WTC11 (cell line): ENCODE measurements at regions of chr2 and their contacts with region 1.

Region 1: GRCh38 chr2:158006961-158007719 is 94.5 kb upstream of the UPP2 start:
- DNase-seq: peak; percentile 32
- ATAC-seq: peak; percentile 54
- H3K4me3 Mint-ChIP-seq: no peak overlapping the region
- H3K27ac Mint-ChIP-seq: no peak overlapping the region
- H3K4me1 Mint-ChIP-seq: peaks cover 39% of the 10 kb centered on the region
- H3K27me3 Mint-ChIP-seq: peaks cover 29% of the 10 kb centered on the region
- CTCF ChIP-seq: no peak

Region 2: GRCh38 chr2:157901325-157901724 is 105.8 kb before region 1 on chr2:
- CTCF ChIA-PET with region 1: interaction called, 14 read pairs
- POLR2A ChIA-PET with region 1: no interaction called
- DNase-seq: no peak
- ATAC-seq: peak; percentile 76
- H3K4me3 Mint-ChIP-seq: no peak overlapping the region
- H3K27ac Mint-ChIP-seq: no peak overlapping the region
- H3K4me1 Mint-ChIP-seq: peaks cover 24% of the 10 kb centered on the region
- H3K27me3 Mint-ChIP-seq: peaks cover 16% of the 10 kb centered on the region
- CTCF ChIP-seq: no peak

Region 3: DNA sequence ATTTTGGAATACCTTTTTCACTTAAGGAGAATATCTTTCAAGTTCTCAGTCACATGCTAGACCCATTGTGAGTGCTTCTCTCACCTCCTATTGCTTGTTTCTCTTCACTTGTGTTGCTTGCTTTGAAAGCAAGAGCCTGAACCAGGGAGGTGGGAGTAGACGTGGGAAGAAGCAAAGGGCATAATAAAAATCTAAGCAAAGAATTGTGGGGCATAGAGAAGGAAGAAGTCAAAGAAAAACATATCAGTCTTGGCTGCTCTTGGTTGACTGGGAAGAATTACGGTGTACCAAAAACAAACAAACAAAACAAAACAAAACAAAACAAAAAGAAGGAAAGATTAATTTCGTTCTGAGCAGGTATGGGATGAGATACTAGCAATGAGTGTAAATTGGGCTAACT is 82.1 kb before region 1 on chr2:
- CTCF ChIA-PET with region 1: no interaction called
- POLR2A ChIA-PET with region 1: no interaction called
- DNase-seq: no peak
- ATAC-seq: no peak
- H3K4me3 Mint-ChIP-seq: no peak overlapping the region
- H3K27ac Mint-ChIP-seq: no peak overlapping the region
- H3K4me1 Mint-ChIP-seq: peaks cover 21% of the 10 kb centered on the region
- H3K27me3 Mint-ChIP-seq: peaks cover 92% of the 10 kb centered on the region
- CTCF ChIP-seq: no peak